H1 (cell line): ENCODE measurements at regions of chr1 and their contacts with region 1.

Region 1: GRCh38 chr1:89519779-89520358 is 4.8 kb upstream of the LRRC8B start:
- DNase-seq: no peak
- H3K4me3 ChIP-seq: no peak overlapping the region
- H3K27ac ChIP-seq: no peak overlapping the region
- H3K4me1 ChIP-seq: peaks cover 0 to 8% (median 0%) of the 10 kb centered on the region in 4 experiments; a peak in 3 of 7 replicates
- H3K27me3 ChIP-seq: no peaks in the 10 kb centered on the region
- CTCF ChIP-seq: peak; percentile 17 to 59 (median 53)
- EP300 ChIP-seq: no peak
- POLR2A ChIP-seq: no peak
- RAD21 ChIP-seq: peak; percentile 71 to 73

Region 2: GRCh38 chr1:89454845-89455521 is 64.9 kb before region 1 on chr1:
- CTCF ChIA-PET with region 1: no interaction called
- POLR2A ChIA-PET with region 1: no interaction called
- DNase-seq: peak in 1 of 2 experiments; percentile 52
- H3K4me3 ChIP-seq: no peak overlapping the region
- H3K27ac ChIP-seq: no peak overlapping the region
- H3K4me1 ChIP-seq: peaks cover 0 to 5% (median 4%) of the 10 kb centered on the region in 4 experiments; a peak in 4 of 7 replicates
- H3K27me3 ChIP-seq: no peaks in the 10 kb centered on the region
- CTCF ChIP-seq: peak in 2 of 3 experiments; percentile 58 to 61; a peak in 3 of 4 replicates
- EP300 ChIP-seq: no peak
- POLR2A ChIP-seq: no peak
- RAD21 ChIP-seq: peak; percentile 92

Region 3: DNA sequence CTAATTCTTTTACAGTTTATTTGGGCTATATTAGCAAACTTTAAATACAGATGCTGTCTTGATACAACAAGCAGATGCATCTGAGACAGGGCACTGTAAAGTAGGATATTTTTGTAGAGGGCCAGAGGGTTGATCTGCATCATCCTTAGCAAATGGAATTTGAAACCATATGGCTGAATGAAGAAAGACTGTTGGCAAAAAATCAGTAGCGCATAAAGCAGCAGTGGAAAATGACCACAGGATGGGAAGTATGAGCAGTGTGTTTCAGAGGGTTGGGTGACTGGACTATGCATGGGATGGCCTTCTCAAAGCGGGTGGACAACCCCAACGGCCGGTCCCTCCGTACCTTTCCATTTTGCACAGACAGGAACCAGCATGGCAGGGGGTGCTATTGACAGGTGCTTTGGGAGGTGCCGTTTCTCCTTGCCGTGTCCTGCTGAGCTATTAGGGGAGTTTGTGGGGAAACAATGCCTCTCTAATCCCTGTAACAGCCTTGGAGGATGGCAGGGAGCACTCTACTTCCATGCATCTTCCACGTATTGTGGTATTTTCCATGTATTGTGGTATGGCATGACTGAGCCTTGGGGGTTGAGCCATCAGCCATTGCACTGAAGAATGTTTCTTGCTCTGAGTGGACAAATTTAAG is 10.7 kb after region 1 on chr1:
- CTCF ChIA-PET with region 1: interaction called, 12 read pairs
- POLR2A ChIA-PET with region 1: interaction called, 6 read pairs
- DNase-seq: no peak
- H3K4me3 ChIP-seq: peak overlapping the region in 1 of 4 experiments; percentile 24; a peak in 1 of 8 replicates
- H3K27ac ChIP-seq: no peak overlapping the region
- H3K4me1 ChIP-seq: peaks cover 3 to 16% (median 6%) of the 10 kb centered on the region in 4 experiments
- H3K27me3 ChIP-seq: no peaks in the 10 kb centered on the region
- CTCF ChIP-seq: no peak
- EP300 ChIP-seq: no peak
- POLR2A ChIP-seq: no peak
- RAD21 ChIP-seq: peak in 1 of 2 experiments; percentile 25; a peak in 1 of 4 replicates

Region 4: GRCh38 chr1:89578151-89578550 is 58.3 kb after region 1 on chr1:
- CTCF ChIA-PET with region 1: interaction called, 10 read pairs
- POLR2A ChIA-PET with region 1: no interaction called
- DNase-seq: no peak
- H3K4me3 ChIP-seq: no peak overlapping the region
- H3K27ac ChIP-seq: no peak overlapping the region
- H3K4me1 ChIP-seq: no peaks in the 10 kb centered on the region
- H3K27me3 ChIP-seq: no peaks in the 10 kb centered on the region; a peak in 1 of 7 replicates
- CTCF ChIP-seq: no peak
- EP300 ChIP-seq: no peak
- POLR2A ChIP-seq: no peak
- RAD21 ChIP-seq: no peak